Tibial artery (tissue), 4 donors: ENCODE measurements at regions of chr2 and their contacts with region 1.

Region 1: DNA sequence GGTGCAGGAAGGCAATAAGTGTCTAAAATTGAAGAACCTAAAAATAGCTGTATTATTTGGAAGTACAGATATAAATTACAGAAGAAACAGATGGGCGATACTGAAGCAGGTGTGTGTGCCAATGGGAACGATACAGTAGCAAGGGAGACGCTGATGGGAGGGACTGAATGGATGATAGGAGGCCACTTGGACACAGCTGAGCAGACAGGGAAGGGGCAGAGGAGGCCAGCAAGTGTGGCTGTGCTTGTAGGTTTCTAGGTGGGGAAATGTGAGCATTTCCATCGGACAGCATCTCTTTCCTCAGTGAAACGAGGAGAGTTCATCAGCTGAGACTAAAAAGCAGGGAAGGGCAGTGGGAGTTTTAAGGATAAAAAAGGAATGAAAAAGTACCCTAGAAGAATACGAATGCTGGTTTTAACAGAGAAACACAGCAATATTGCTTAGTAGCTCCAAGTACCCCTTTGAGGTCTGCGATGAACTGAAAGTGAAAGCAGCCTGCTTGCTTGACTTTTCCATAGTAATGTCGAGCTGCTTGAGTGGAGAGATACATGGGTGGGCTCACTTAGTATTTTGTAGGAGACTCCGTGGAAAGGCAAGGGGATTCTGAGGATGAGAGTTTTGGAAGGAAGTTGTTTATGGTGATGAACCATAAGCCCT is 91.7 kb upstream of the EPC2 start:
- DNase-seq: no peak
- H3K4me3 ChIP-seq: peak overlapping the region; percentile 19 to 37
- H3K27ac ChIP-seq: no peak overlapping the region
- H3K4me1 ChIP-seq: no peaks in the 10 kb centered on the region
- H3K27me3 ChIP-seq: no peaks in the 10 kb centered on the region
- CTCF ChIP-seq: no peak

Region 2: DNA sequence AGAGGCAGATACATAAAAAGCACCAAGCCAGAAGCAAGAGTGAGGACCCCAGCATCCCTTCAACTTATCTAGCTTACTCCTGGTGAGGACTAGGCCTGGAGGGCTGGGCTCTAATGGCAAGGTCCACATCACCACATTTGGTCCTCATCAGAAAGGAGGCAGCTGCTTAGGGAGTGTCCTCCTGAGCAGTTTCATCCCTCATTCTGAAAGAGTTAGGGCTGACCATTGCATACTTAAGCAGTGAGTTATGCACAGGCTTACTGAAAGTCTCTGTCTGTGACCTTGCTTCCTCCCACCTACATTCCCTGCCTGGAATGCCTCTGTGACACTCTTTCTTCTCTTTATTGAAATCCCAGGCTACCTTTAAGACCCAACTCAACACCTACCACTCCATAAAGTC is 1009.7 kb before region 1 on chr2:
- intact Hi-C with region 1: loop called (anchors 10 kb)
- DNase-seq: no peak
- H3K4me3 ChIP-seq: no peak overlapping the region
- H3K27ac ChIP-seq: no peak overlapping the region
- H3K4me1 ChIP-seq: no peaks in the 10 kb centered on the region
- H3K27me3 ChIP-seq: no peaks in the 10 kb centered on the region
- CTCF ChIP-seq: no peak

Region 3: GRCh38 chr2:148259674-148260073 is 293.1 kb before region 1 on chr2:
- intact Hi-C with region 1: no loop called
- DNase-seq: no peak
- H3K4me3 ChIP-seq: no peak overlapping the region
- H3K27ac ChIP-seq: no peak overlapping the region
- H3K4me1 ChIP-seq: no peaks in the 10 kb centered on the region
- H3K27me3 ChIP-seq: no peaks in the 10 kb centered on the region
- CTCF ChIP-seq: no peak